H1 (cell line): ENCODE measurements at regions of chr10 and their contacts with region 1.

Region 1: GRCh38 chr10:78852466-78853240 is 216.1 kb upstream of the ZMIZ1 start:
- DNase-seq: peak in 1 of 2 experiments; percentile 68
- H3K4me3 ChIP-seq: no peak overlapping the region
- H3K27ac ChIP-seq: no peak overlapping the region
- H3K4me1 ChIP-seq: peaks cover 0 to 4% (median 2%) of the 10 kb centered on the region in 4 experiments; a peak in 5 of 7 replicates
- H3K27me3 ChIP-seq: 0 out of 7 replicates have a peak, but pooled peaks cover 0 to 2% (median 0%) of the 10 kb centered on the region in 4 experiments
- CTCF ChIP-seq: peak; percentile 59 to 75 (median 67)
- EP300 ChIP-seq: no peak
- POLR2A ChIP-seq: no peak
- RAD21 ChIP-seq: peak; percentile 74 to 78

Region 2: GRCh38 chr10:78763651-78764311 is 88.9 kb before region 1 on chr10:
- CTCF ChIA-PET with region 1: no interaction called
- POLR2A ChIA-PET with region 1: no interaction called
- DNase-seq: no peak
- H3K4me3 ChIP-seq: no peak overlapping the region
- H3K27ac ChIP-seq: no peak overlapping the region
- H3K4me1 ChIP-seq: no peaks in the 10 kb centered on the region; a peak in 1 of 7 replicates
- H3K27me3 ChIP-seq: no peaks in the 10 kb centered on the region
- CTCF ChIP-seq: no peak
- EP300 ChIP-seq: no peak
- POLR2A ChIP-seq: no peak
- RAD21 ChIP-seq: no peak

Region 3: DNA sequence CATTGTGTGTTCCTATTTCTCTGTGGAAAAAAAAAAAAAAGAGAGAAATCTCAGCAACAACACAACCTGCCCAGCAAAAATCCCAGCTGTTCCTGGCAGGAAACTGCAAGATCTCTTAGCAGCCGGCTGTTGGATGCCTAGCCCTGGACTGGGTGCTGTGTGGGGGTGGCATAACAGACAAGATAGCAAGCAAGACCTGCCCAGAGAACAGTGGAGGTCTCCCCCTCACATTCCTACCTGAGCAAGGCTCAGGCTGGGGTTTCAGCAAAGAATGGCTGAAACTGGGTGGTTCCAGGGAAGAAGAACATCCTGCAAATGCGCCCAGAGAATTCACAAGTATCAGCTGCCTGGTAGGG is 32.7 kb before region 1 on chr10:
- CTCF ChIA-PET with region 1: interaction called, 10 read pairs
- POLR2A ChIA-PET with region 1: no interaction called
- DNase-seq: no peak
- H3K4me3 ChIP-seq: no peak overlapping the region
- H3K27ac ChIP-seq: no peak overlapping the region
- H3K4me1 ChIP-seq: peaks cover 0 to 12% (median 10%) of the 10 kb centered on the region in 4 experiments; a peak in 5 of 7 replicates
- H3K27me3 ChIP-seq: no peaks in the 10 kb centered on the region
- CTCF ChIP-seq: no peak
- EP300 ChIP-seq: no peak
- POLR2A ChIP-seq: no peak
- RAD21 ChIP-seq: no peak

Region 4: DNA sequence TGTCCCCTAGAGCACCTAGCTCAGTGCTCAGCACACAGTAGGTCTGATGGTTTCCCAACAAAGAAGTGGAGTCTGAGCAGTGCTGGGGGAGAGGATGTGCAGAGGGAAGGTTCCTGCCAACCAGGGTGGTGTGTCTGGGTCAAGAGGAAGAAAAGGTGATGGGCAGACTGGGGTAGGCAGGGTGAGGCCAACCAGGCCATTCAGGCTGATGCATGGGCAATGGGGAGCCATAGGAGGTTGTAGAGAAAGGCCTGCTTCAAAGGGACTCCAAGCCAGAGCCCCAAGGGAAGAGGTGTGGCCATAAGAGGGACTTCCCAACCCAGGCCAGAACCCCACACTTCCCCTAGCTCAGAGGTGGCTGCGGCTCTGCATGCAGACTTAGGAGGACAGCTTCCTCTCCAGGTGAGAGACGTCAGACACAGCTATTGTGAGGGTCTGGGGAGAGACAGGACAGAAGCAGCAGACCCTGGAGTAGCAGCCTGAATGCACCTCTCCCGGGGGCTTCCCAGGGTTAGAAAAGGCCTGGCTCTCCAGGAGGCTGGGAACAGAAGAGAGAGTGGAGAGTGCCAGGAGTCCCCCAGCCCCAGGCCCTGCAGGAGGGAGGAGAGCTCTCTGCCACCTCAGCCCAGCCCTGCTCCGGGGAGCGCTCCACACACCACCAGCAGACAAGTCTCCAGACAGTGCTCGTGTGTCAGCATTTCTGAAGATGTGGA is 128.8 kb after region 1 on chr10:
- CTCF ChIA-PET with region 1: interaction called, 10 read pairs
- POLR2A ChIA-PET with region 1: no interaction called
- DNase-seq: no peak
- H3K4me3 ChIP-seq: no peak overlapping the region
- H3K27ac ChIP-seq: no peak overlapping the region
- H3K4me1 ChIP-seq: peaks cover 0 to 25% (median 6%) of the 10 kb centered on the region in 4 experiments; a peak in 6 of 7 replicates
- H3K27me3 ChIP-seq: no peaks in the 10 kb centered on the region; a peak in 2 of 7 replicates
- CTCF ChIP-seq: no peak
- EP300 ChIP-seq: no peak
- POLR2A ChIP-seq: no peak
- RAD21 ChIP-seq: no peak

Region 5: GRCh38 chr10:79067241-79068202 is 214.9 kb after region 1 on chr10:
- CTCF ChIA-PET with region 1: interaction called, 10 read pairs
- POLR2A ChIA-PET with region 1: no interaction called
- DNase-seq: peak; percentile 85 to 96
- H3K4me3 ChIP-seq: peak overlapping the region; percentile 73 to 96 (median 80)
- H3K27ac ChIP-seq: no peak overlapping the region
- H3K4me1 ChIP-seq: peaks cover 12 to 30% (median 16%) of the 10 kb centered on the region in 4 experiments
- H3K27me3 ChIP-seq: peaks cover 0 to 14% (median 9%) of the 10 kb centered on the region in 4 experiments; a peak in 4 of 7 replicates
- CTCF ChIP-seq: peak; percentile 26 to 37 (median 28); a peak in 3 of 4 replicates
- EP300 ChIP-seq: peak in 1 of 2 experiments; percentile 84; a peak in 1 of 3 replicates
- POLR2A ChIP-seq: no peak
- RAD21 ChIP-seq: peak; percentile 38 to 60